Heart right ventricle (tissue), 16 donors: ENCODE measurements at regions of chr16 and their contacts with region 1.

Region 1: DNA sequence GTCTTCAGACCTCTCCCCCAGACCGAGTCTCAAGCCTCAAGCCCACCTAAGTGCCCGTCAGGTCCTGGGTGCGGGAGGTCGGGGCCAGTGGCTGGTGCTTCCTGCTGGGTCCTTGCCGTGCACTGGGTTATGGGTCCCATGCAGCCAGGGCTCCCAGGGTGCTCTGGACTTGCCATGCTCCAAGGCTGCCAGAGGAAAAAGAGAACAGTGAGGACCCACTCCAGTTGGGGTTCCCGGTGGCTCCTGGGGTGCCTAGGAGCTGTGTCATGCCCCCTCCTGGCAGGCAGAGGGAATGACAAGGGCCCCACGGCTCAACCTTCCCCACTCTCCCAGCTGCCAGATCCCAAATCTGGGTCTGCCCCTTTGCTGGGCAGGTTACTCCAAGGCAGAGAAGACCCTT is 3.8 kb downstream of the SNX20 start:
- DNase-seq: no peak
- ATAC-seq: no peak
- H3K4me3 ChIP-seq: no peak overlapping the region
- H3K27ac ChIP-seq: no peak overlapping the region
- H3K4me1 ChIP-seq: peaks cover 0 to 28% (median 0%) of the 10 kb centered on the region in 9 donors
- H3K27me3 ChIP-seq: peaks cover 0 to 30% (median 23%) of the 10 kb centered on the region in 7 donors
- CTCF ChIP-seq: peak in 4 of 9 donors; percentile 16 to 54 (median 25)

Region 2: DNA sequence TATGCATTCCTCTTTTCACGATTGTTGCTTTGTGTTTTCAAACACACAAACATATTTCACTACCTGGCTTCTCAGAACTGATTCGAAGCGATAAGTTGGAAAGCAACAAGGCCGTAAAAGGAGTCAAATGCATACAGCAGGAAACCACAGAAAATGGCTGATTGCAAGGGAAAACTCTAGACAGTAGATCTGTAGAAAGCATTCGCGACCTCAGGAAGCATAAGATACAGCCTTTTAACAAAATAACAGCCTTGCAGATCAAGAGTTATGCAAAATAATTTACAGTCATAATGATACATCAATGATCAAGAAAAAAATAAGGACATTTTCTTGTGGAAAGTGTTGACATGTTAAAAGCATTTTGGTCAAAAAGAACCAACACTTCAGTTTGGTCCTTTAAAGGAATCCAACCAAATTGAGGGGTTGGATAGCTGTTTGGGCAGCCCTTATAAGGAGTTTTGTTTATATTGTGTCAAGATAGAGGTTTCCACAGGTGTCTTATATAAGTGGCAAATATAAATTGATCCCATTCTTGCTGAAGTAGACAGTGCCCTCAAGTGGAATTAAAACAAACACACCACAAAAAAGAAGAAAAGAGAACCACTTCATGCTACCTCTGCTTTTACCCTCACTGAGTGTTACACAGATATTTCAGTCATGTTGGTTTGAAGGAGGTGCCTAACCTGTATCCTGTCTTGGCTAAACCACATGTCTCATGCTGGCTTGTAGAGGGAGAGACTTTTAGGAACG is 70.0 kb after region 1 on chr16:
- intact Hi-C with region 1: loop called in 1 of 10 experiments (anchors 5 kb)
- DNase-seq: no peak
- ATAC-seq: peak in 6 of 8 donors; percentile 18 to 44 (median 32)
- H3K4me3 ChIP-seq: no peak overlapping the region
- H3K27ac ChIP-seq: peak overlapping the region in 1 of 10 donors; percentile 98
- H3K4me1 ChIP-seq: peaks cover 0 to 73% (median 64%) of the 10 kb centered on the region in 9 donors
- H3K27me3 ChIP-seq: no peaks in the 10 kb centered on the region
- CTCF ChIP-seq: peak in 7 of 9 donors; percentile 11 to 53 (median 34)